OCI-LY7 (cell line): ENCODE measurements at regions of chr17 and their contacts with region 1.

Region 1: DNA sequence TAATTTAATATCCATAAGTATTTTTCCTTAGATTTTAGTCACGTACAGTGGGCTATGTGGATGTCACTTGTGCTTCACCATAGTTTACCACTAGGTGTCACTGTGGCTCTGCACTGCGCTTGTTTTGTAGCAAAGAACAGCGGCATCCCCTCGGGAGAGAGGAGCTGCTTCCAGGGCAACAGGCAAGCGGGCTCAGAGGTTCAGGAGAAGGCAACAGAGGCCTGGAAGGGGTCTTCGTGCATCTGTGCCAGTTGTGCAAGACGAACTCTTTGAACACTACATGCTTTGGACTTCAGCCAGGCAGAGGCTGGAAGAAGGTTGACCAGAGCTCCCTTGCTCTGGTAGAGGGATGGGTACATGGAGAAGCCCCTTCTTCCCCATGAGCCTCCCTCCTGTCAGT is 20.6 kb downstream of the CYB561 start:
- DNase-seq: peak; percentile 81
- H3K4me3 ChIP-seq: no peak overlapping the region
- H3K27ac ChIP-seq: no peak overlapping the region
- H3K4me1 ChIP-seq: peaks cover 14% of the 10 kb centered on the region
- CTCF ChIP-seq: peak; percentile 98

Region 2: DNA sequence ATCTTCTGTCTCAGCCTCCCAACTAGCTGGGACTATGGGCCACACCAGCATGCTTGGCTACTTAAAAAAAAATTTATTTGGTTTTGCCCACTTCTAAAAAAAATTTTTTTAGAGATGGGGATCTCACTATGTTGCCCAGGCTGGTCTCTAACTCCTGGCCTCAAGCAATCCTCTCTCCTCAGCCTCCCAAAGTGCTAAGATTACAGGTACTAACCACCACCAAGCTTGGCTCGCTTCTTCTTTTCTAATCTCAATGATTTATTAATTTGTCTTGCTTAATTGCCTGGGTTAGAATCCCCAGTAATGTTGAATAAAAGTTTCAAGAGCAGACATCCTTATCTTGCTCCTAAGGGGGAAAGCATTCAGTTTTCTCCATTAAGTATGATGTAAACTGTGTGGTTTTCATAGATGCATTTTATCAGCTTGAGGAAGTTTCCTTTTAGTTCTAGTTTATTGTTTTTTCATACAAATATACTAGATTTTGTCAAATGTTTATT is 1768.7 kb before region 1 on chr17:
- CTCF ChIA-PET with region 1: no interaction called
- POLR2A ChIA-PET with region 1: no interaction called
- intact Hi-C with region 1: no loop called
- DNase-seq: no peak
- H3K4me3 ChIP-seq: no peak overlapping the region
- H3K27ac ChIP-seq: no peak overlapping the region
- H3K4me1 ChIP-seq: no peaks in the 10 kb centered on the region
- CTCF ChIP-seq: no peak

Region 3: GRCh38 chr17:63381101-63381729 is 44.3 kb before region 1 on chr17:
- CTCF ChIA-PET with region 1: no interaction called
- POLR2A ChIA-PET with region 1: no interaction called
- intact Hi-C with region 1: no loop called
- DNase-seq: no peak
- H3K4me3 ChIP-seq: no peak overlapping the region
- H3K27ac ChIP-seq: no peak overlapping the region
- H3K4me1 ChIP-seq: no peaks in the 10 kb centered on the region
- CTCF ChIP-seq: no peak

Region 4: DNA sequence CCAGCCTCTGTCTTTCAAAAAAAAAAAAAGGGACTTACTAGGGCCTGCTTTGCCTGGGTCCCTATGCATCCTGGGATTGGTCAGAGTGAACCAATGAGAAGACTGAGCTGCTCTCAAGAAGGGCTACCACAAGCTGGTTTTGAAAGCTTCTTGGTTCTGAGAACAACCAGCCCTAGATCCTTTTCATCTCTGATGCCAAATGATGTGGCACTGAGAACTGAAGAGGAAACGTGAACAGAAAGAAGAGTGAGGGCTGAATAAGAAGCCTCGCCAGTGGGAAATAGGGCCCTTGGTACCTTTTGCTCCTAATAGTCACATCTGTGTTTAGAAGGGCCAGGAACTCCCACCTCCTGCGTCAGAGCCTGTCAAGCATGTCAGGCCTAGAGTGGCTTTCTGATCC is 185.9 kb after region 1 on chr17:
- CTCF ChIA-PET with region 1: interaction called, 9 read pairs
- POLR2A ChIA-PET with region 1: interaction called, 4 read pairs
- intact Hi-C with region 1: loop called (anchors 1 kb)
- DNase-seq: no peak
- H3K4me3 ChIP-seq: no peak overlapping the region
- H3K27ac ChIP-seq: no peak overlapping the region
- H3K4me1 ChIP-seq: no peaks in the 10 kb centered on the region
- CTCF ChIP-seq: no peak